Aorta (tissue), 5 donors: ENCODE measurements at regions of chrX and their contacts with region 1.

Region 1: GRCh38 chrX:15674841-15675489 is 10.4 kb upstream of the CLTRN start:
- DNase-seq: peak; percentile 98
- ATAC-seq: peak; percentile 99
- H3K4me3 ChIP-seq: peak overlapping the region; percentile 16 to 62
- H3K27ac ChIP-seq: peak overlapping the region; percentile 73 to 85
- H3K4me1 ChIP-seq: peaks cover 0 to 2% of the 10 kb centered on the region in 2 donors
- H3K27me3 ChIP-seq: no peaks in the 10 kb centered on the region

Region 2: GRCh38 chrX:15493118-15493962 is 181.6 kb before region 1 on chrX and contains the start of gene PIR:
- intact Hi-C with region 1: loop called in 1 of 2 experiments (anchors 5 kb)
- DNase-seq: peak; percentile 92 to 96
- ATAC-seq: peak; percentile 98
- H3K4me3 ChIP-seq: peak within 1 kb of the TSS; percentile 58 to 81
- H3K27ac ChIP-seq: peak within 1 kb of the TSS in 1 of 2 donors; percentile 56
- H3K4me1 ChIP-seq: no peaks in the 10 kb centered on the region
- H3K27me3 ChIP-seq: no peaks in the 10 kb centered on the region
- total RNA-seq, gene PIR: 11.5 to 26.3 TPM

Region 3: GRCh38 chrX:15789979-15790768 is 115.2 kb after region 1 on chrX and contains the start of gene ZRSR2:
- intact Hi-C with region 1: loop called in 1 of 2 experiments (anchors 5 kb)
- DNase-seq: peak; percentile 92 to 95
- ATAC-seq: peak; percentile 96
- H3K4me3 ChIP-seq: peak within 1 kb of the TSS; percentile 62 to 70
- H3K27ac ChIP-seq: peak within 1 kb of the TSS in 1 of 2 donors; percentile 72
- H3K4me1 ChIP-seq: no peaks in the 10 kb centered on the region
- H3K27me3 ChIP-seq: no peaks in the 10 kb centered on the region
- total RNA-seq, gene ZRSR2: 13.4 to 18.9 TPM

Region 4: DNA sequence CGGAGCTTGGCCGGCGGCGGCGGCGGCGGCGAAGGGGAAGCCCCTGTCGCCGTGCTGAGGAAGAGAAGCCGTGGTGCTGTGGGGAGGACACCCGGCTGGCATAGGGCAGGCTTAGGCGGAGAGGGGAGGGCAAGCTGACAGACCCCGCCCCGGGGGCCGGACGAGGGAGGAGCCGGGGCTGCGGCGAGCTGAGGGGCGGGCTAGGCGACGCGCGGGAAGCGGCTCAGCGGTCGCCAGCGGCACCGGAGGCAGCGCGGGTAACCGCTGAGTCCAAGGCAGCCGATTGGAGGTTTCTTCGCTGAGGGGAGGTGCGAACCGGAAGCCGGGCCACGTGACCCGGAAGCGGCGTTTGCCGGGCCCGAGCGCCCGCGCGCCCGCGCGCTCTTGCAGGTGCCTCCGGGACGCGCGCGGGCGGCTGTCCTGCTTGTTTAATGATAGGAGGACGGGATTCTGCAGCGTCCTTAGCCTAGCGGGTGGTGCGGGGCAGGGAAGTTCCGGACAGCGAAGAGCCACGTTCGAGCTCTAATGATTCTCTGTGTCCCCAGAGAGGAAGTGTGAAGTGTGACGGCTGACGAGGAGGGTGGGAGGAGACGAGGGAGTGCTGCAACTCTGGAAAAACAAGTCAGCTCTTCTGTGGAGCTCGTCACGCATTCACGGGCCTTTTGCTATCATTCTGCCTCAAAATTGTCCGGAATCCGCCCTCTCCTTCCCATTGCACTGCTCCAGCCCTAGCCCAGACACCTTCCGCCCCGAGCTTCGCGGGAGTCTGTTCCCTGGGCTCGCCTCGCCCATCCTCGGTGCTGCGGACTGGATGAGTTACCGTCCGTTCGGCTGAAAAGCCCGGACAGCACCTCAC is 180.0 kb after region 1 on chrX and contains the start of gene AP1S2:
- intact Hi-C with region 1: loop called (anchors 2 to 10 kb)
- DNase-seq: peak; percentile 98
- ATAC-seq: peak; percentile 97
- H3K4me3 ChIP-seq: peak within 1 kb of the TSS; percentile 62 to 98
- H3K27ac ChIP-seq: peak within 1 kb of the TSS; percentile 7 to 96
- H3K4me1 ChIP-seq: no peaks in the 10 kb centered on the region
- H3K27me3 ChIP-seq: no peaks in the 10 kb centered on the region
- total RNA-seq, gene AP1S2: 49.1 to 55.9 TPM

Region 5: DNA sequence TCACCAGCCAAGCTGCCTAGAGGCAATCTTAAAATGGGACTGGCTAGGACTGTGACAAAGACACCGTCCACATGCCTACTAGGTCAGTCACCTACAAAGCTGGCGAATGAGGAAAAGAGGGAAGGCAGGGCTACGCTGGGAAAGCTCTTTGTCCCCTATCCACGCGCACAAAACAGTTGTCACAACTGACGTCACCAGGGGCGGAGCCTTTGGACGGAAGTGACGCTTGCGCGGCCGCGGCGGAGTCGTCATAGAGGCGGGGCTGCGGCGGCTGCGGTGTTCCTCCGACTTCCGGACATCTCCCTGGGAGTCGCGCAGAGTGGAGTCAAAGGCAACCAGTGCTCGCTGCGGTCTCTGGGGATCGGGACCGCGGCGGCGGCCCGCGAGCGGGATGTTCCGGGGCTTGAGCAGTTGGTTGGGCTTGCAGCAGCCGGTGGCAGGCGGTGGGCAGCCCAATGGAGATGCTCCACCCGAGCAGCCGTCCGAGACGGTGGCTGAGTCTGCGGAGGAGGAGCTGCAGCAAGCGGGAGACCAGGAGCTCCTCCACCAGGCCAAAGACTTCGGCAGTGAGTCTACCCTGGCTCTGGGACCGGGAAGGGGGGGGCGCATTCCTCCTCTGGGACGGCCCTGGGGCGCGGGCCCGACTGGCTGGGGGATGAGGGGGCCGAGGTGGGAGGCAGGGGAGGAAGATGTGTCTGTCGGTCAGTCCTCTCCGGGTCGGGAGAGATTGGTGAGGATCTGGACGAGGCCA is 1044.5 kb after region 1 on chrX and contains the start of gene SYAP1:
- intact Hi-C with region 1: loop called in 1 of 2 experiments (anchors 10 kb)
- DNase-seq: peak; percentile 98 to 100
- ATAC-seq: peak; percentile 99
- H3K4me3 ChIP-seq: peak within 1 kb of the TSS; percentile 89 to 90
- H3K27ac ChIP-seq: peak within 1 kb of the TSS; percentile 71 to 97
- H3K4me1 ChIP-seq: peaks cover 0 to 5% of the 10 kb centered on the region in 2 donors
- H3K27me3 ChIP-seq: no peaks in the 10 kb centered on the region
- total RNA-seq, gene SYAP1: 28.3 to 36.3 TPM